Thyroid gland (tissue), 4 donors: ENCODE measurements at regions of chr17 and their contacts with region 1.

Region 1: DNA sequence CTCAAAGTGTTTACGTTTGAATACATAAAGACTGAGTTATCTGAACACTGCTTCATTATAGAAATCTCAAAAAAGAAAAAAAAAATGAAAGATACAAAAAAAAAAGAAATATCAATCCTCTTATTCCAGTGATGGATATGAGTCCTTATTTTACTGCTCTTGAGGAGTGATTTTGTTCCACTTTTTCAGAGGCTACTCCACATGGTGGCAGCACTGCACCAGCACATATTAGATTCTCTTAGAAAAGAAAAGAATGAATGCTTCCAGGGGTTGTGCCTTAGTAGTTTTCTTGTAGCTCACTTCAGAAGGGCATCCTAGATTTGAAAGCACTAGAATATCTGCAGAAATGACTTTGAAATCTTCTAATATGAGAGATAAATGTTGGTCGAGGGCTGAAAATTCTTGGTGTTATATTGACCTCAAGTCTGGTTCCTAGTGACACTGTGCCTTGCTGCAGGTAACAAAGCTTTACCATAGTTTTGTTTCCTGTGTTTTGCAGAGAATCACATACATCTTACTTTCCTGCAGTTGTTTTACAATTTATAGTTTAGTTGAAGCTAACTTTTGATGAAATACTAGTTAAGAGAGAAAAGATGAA is 25.9 kb downstream of the AP2B1 start:
- DNase-seq: peak; percentile 58 to 70
- H3K4me3 ChIP-seq: no peak overlapping the region
- H3K27ac ChIP-seq: no peak overlapping the region
- H3K4me1 ChIP-seq: peaks cover 10 to 16% of the 10 kb centered on the region in 2 donors
- H3K27me3 ChIP-seq: no peaks in the 10 kb centered on the region
- CTCF ChIP-seq: peak; percentile 16 to 69 (median 52)
- POLR2A ChIP-seq: no peak

Region 2: GRCh38 chr17:35747540-35748017 is 134.6 kb after region 1 on chr17:
- intact Hi-C with region 1: loop called (anchors 5 kb)
- DNase-seq: peak; percentile 81 to 83
- H3K4me3 ChIP-seq: no peak overlapping the region
- H3K27ac ChIP-seq: no peak overlapping the region
- H3K4me1 ChIP-seq: peaks cover 5% of the 10 kb centered on the region in 2 donors
- H3K27me3 ChIP-seq: no peaks in the 10 kb centered on the region
- CTCF ChIP-seq: peak; percentile 82 to 94 (median 90)
- POLR2A ChIP-seq: no peak

Region 3: GRCh38 chr17:35942588-35943186 is 329.7 kb after region 1 on chr17:
- intact Hi-C with region 1: no loop called
- DNase-seq: no peak
- H3K4me3 ChIP-seq: no peak overlapping the region
- H3K27ac ChIP-seq: no peak overlapping the region
- H3K4me1 ChIP-seq: no peaks in the 10 kb centered on the region
- H3K27me3 ChIP-seq: no peaks in the 10 kb centered on the region
- CTCF ChIP-seq: no peak
- POLR2A ChIP-seq: no peak